Aorta (tissue), 5 donors: ENCODE measurements at regions of chr11 and their contacts with region 1.

Region 1: DNA sequence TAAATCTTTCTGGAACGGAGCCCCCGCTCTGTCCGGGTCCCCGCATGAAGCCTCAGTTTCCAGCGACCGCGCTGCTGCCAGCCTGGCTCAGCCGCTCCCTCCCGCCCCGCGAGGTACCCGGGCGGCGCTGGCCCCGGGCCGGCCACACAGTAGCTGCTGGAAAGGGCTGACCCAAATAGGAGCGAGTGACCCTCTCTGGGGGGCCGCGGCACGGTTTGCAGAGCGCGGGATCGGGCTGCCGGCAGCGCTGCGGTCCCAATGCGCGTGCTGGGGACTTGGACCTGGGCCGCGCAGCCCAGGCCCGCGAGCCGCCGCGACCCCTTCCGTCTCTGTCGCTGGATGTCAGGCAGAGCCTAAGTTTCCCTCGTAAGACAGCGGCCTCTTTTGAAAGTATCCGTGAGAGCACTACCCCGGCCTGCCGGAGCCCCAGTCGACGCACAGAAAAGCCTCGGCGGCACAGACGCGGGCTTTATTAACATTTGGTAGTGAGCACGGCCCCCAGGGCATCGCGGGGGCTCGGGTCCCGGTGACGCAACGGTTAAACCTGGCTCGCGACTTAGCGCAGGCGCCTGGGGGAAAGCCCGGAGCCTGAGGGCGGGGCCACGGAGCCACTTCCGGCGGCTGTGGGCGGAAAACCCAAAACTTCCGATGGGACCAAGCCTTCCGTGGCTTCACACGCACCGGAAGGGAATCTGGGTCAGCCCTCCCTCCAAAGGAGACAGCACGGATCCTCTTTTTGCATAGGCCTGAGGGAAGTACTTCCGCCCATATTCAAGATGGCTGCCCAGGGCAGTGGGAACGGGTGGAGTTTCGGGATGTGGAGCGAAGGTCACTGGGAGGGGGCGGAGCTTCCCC is 14.9 kb downstream of the BAD start:
- DNase-seq: peak; percentile 98 to 99
- ATAC-seq: peak; percentile 93
- H3K4me3 ChIP-seq: peak overlapping the region; percentile 46 to 72
- H3K27ac ChIP-seq: peak overlapping the region in 1 of 2 donors; percentile 92
- H3K4me1 ChIP-seq: no peaks in the 10 kb centered on the region
- H3K27me3 ChIP-seq: no peaks in the 10 kb centered on the region

Region 2: GRCh38 chr11:64240394-64241174 is 29.0 kb before region 1 on chr11 and contains the start of gene FKBP2:
- intact Hi-C with region 1: loop called in 1 of 2 experiments (anchors 1 kb)
- DNase-seq: peak; percentile 98 to 99
- ATAC-seq: peak; percentile 92
- H3K4me3 ChIP-seq: peak within 1 kb of the TSS; percentile 74 to 84
- H3K27ac ChIP-seq: peak within 1 kb of the TSS; percentile 76 to 94
- H3K4me1 ChIP-seq: no peaks in the 10 kb centered on the region
- H3K27me3 ChIP-seq: no peaks in the 10 kb centered on the region
- total RNA-seq, gene FKBP2: 50.2 to 52.6 TPM

Region 3: DNA sequence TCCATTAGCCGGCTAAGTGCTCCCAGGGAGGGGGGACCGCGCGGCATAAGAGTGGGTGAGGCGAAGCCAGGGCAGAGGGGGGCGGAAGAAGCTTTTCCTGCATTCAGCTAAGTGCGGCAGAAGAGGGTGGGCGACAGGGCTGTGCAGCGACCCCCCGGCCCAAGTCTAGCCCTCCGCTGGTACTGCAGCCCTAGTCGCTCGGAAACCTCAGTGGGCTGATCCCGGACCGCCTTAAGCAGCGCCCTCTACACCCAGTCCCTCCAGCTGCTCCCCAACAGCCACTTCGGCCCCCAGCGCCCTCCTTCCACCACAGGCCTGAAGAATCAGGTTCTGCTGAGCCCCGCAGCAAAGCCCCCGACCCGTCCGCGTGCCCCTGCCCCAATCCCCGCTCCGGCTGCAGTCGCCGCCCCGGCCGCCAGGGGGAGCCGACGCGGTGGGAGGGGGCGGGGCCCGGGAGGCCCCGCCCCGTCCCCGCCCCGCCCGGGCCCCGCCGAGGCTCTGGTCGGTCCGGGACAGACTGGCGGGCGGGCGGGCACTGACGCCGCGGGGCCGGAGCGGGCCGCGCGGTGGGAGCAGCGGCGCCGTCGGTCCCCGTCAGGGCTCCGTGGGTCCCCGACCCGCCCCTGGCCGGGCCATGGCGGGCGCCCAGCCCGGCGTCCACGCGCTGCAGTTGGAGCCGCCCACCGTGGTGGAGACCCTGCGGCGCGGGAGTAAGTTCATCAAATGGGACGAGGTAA is 18.4 kb before region 1 on chr11 and contains the start of gene PLCB3:
- intact Hi-C with region 1: loop called in 1 of 2 experiments (anchors 2 kb)
- DNase-seq: peak in 1 of 2 donors; percentile 85
- ATAC-seq: peak; percentile 76
- H3K4me3 ChIP-seq: peak within 1 kb of the TSS; percentile 59 to 81
- H3K27ac ChIP-seq: peak within 1 kb of the TSS in 1 of 2 donors; percentile 14
- H3K4me1 ChIP-seq: no peaks in the 10 kb centered on the region
- H3K27me3 ChIP-seq: no peaks in the 10 kb centered on the region
- total RNA-seq, gene PLCB3: 29.4 to 32.3 TPM